Heart left ventricle (tissue), 16 donors: ENCODE measurements at regions of chr15 and their contacts with region 1.

Region 1: DNA sequence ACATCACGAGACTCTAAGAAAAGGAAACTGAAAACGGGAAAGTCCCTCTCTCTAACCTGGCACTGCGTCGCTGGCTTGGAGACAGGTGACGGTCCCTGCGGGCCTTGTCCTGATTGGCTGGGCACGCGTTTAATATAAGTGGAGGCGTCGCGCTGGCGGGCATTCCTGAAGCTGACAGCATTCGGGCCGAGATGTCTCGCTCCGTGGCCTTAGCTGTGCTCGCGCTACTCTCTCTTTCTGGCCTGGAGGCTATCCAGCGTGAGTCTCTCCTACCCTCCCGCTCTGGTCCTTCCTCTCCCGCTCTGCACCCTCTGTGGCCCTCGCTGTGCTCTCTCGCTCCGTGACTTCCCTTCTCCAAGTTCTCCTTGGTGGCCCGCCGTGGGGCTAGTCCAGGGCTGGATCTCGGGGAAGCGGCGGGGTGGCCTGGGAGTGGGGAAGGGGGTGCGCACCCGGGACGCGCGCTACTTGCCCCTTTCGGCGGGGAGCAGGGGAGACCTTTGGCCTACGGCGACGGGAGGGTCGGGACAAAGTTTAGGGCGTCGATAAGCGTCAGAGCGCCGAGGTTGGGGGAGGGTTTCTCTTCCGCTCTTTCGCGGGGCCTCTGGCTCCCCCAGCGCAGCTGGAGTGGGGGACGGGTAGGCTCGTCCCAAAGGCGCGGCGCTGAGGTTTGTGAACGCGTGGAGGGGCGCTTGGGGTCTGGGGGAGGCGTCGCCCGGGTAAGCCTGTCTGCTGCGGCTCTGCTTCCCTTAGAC is at the start of gene B2M:
- DNase-seq: peak; percentile 93 to 97 (median 96)
- ATAC-seq: peak; percentile 96 to 97 (median 96)
- H3K4me3 ChIP-seq: peak within 1 kb of the TSS; percentile 74 to 95 (median 86)
- H3K27ac ChIP-seq: peak within 1 kb of the TSS; percentile 94 to 100 (median 99)
- H3K4me1 ChIP-seq: peaks cover 0 to 47% (median 21%) of the 10 kb centered on the region in 12 donors
- H3K27me3 ChIP-seq: no peaks in the 10 kb centered on the region
- CTCF ChIP-seq: no peak
- POLR2A ChIP-seq: peak; percentile 95 to 99
- total RNA-seq, gene B2M: 1,033 to 5,448 (median 1,200) TPM

Region 2: DNA sequence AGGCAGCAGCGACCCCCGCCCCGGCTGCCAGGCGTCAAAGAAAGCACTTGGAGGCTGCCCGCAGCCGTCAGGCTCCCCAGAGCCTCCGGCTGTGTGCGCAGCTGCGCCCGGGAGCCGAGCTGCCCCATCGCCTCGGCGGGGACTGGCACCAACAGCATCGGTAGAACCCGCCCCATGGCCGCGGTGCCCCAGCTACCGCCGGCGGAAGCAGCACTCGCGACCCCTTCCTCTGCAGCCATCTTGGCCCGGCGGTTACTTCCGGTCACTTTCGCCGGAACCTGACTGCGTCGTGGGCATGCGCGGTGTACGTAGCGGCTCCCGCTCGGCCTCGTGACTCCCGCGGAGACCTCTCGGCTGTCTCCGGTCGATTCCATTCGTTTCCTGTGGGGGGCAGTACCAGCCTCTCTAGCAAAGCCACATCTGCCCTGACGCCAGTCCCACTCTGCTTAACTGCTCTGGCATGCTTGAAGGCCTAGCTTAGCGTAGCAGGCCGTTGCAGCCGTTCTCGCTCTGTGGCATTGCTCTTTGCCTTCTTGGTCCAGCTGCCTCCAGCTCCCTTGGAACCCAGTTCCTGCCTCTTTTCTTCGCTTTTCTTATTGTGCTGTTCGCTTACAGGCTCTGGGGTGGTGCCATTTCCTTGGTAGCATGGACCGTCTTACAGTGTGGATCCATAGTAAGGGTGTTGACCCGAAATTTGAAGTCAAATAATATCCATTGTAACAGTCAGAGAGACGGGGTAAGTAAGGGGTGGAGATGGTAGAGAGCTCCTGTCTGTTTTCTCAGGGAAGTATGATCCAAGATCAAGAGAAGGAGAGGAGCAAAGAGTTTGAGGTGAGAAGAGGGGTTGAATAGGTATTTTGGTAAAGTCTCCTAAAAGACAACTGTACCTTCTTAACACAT is 47.9 kb before region 1 on chr15 and contains the start of gene SPG11:
- intact Hi-C with region 1: loop called in 8 of 10 experiments (anchors 1 to 5 kb)
- DNase-seq: peak; percentile 98 to 99 (median 99)
- ATAC-seq: peak; percentile 98 to 99 (median 98)
- H3K4me3 ChIP-seq: peak within 1 kb of the TSS; percentile 69 to 99 (median 93)
- H3K27ac ChIP-seq: peak within 1 kb of the TSS; percentile 91 to 99 (median 97)
- H3K4me1 ChIP-seq: peaks cover 0 to 49% (median 15%) of the 10 kb centered on the region in 12 donors
- H3K27me3 ChIP-seq: no peaks in the 10 kb centered on the region
- CTCF ChIP-seq: peak; percentile 92 to 98 (median 96)
- POLR2A ChIP-seq: peak in 1 of 2 donors; percentile 88
- total RNA-seq, gene SPG11: 35.4 to 69.4 (median 48.8) TPM

Region 3: GRCh38 chr15:44670491-44670890 is 41.0 kb before region 1 on chr15:
- intact Hi-C with region 1: loop called in 4 of 10 experiments (anchors 5 kb)
- DNase-seq: no peak
- ATAC-seq: no peak
- H3K4me3 ChIP-seq: no peak overlapping the region
- H3K27ac ChIP-seq: no peak overlapping the region
- H3K4me1 ChIP-seq: peaks cover 0 to 26% (median 0%) of the 10 kb centered on the region in 12 donors
- H3K27me3 ChIP-seq: no peaks in the 10 kb centered on the region
- CTCF ChIP-seq: no peak
- POLR2A ChIP-seq: no peak

Region 4: DNA sequence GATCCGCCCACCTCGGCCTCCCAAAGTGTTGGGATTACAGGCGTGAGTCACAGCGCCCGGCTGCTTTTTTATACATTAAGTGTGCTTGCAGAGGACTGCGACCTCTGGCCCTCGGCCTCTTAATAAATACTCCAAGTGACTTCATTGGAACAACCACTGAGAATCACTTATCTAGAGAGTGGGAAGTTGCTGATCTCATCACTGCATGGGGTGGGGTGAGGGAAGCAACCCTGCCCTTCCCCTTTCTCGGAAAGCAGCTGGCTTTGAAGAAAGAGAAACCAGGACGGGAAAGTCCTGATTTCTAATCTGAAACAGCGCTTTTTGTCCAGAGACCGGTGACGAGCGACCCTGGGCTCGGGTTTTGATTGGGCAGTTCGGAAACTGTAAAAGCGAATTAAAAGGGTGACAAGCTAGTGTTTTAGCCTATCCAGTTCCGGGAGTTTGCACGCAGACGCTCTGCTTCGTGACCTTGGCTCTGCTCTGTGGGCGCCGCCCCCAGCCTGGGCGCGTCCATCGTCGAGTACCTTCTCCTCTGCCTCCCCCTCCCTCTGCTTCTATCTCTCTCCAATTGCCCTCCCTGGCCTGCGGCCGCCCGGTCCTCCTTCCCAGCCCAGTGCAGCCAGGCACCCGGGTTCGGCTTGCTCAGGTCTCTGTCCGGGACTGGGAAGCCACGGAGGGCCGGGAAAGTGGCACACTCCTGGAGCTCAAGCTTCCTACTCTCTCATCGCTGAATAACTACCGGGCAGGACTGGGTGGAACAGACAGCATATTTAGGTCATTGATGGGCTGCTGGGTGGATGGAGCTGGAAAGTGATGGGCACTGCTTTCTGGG is 17.3 kb after region 1 on chr15:
- intact Hi-C with region 1: loop called in 8 of 10 experiments (anchors 1 to 2 kb)
- DNase-seq: peak; percentile 94 to 97 (median 96)
- ATAC-seq: peak; percentile 96 to 98 (median 96)
- H3K4me3 ChIP-seq: peak overlapping the region; percentile 66 to 92 (median 82)
- H3K27ac ChIP-seq: peak overlapping the region; percentile 94 to 100 (median 99)
- H3K4me1 ChIP-seq: peaks cover 3 to 81% (median 43%) of the 10 kb centered on the region in 12 donors
- H3K27me3 ChIP-seq: no peaks in the 10 kb centered on the region
- CTCF ChIP-seq: no peak
- POLR2A ChIP-seq: peak in 1 of 2 donors; percentile 85